Gastrocnemius medialis (tissue), 4 donors: ENCODE measurements at regions of chr20 and their contacts with region 1.

Region 1: DNA sequence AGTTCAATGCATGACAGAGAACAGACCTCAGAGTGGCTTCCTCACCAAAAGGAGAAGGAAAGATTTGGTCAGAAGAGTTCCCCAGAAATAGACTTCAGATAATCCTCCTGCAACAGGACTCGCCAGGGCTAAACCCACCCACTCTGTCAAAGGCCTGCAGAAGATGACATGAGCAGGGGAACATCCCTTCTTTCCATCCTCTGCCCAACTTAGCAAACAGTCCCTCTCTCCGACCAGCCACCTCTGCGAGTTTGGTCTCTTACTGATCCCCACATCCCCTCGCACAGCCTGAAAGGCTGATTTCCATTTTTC is 7.5 kb downstream of the NFATC2 start:
- DNase-seq: no peak
- ATAC-seq: no peak
- H3K4me3 ChIP-seq: no peak overlapping the region
- H3K27ac ChIP-seq: no peak overlapping the region
- H3K4me1 ChIP-seq: peaks cover 27% of the 10 kb centered on the region in 2 donors
- H3K27me3 ChIP-seq: no peaks in the 10 kb centered on the region
- CTCF ChIP-seq: no peak
- POLR2A ChIP-seq: no peak

Region 2: GRCh38 chr20:51569827-51570738 is 35.1 kb after region 1 on chr20:
- in situ Hi-C with region 1: no loop called
- intact Hi-C with region 1: loop called (anchors 5 kb)
- DNase-seq: peak; percentile 71 to 89
- ATAC-seq: peak; percentile 88 to 93
- H3K4me3 ChIP-seq: peak overlapping the region; percentile 33 to 45 (median 40)
- H3K27ac ChIP-seq: peak overlapping the region; percentile 75 to 89 (median 88)
- H3K4me1 ChIP-seq: peaks cover 29 to 45% of the 10 kb centered on the region in 2 donors
- H3K27me3 ChIP-seq: no peaks in the 10 kb centered on the region
- CTCF ChIP-seq: no peak
- POLR2A ChIP-seq: peak; percentile 26 to 29